ENCODE measurements at regions of chr9 and their contacts with region 1.

Region 1: GRCh38 chr9:763692-764524 is 77.6 kb upstream of the DMRT1 start:
- DNase-seq: peak; percentile 38 to 74
- ATAC-seq: peak; percentile 90 to 98 (median 96)
- H3K4me3 ChIP-seq: peak overlapping the region in 5 of 10 donors; percentile 10 to 41 (median 29)
- H3K27ac ChIP-seq: no peak overlapping the region
- H3K4me1 ChIP-seq: peaks cover 0 to 15% (median 0%) of the 10 kb centered on the region in 9 donors
- H3K27me3 ChIP-seq: peaks cover 0 to 12% (median 0%) of the 10 kb centered on the region in 7 donors
- CTCF ChIP-seq: peak; percentile 64 to 96 (median 92)

Region 2: GRCh38 chr9:385818-386398 is 378.0 kb before region 1 on chr9:
- intact Hi-C with region 1: loop called in 7 of 10 experiments (anchors 2 to 10 kb)
- DNase-seq: peak in 1 of 2 donors; percentile 45
- ATAC-seq: peak in 7 of 8 donors; percentile 69 to 89 (median 86)
- H3K4me3 ChIP-seq: no peak overlapping the region
- H3K27ac ChIP-seq: no peak overlapping the region
- H3K4me1 ChIP-seq: no peaks in the 10 kb centered on the region
- H3K27me3 ChIP-seq: peaks cover 0 to 3% (median 0%) of the 10 kb centered on the region in 7 donors
- CTCF ChIP-seq: peak; percentile 69 to 91 (median 87)

Region 3: GRCh38 chr9:650362-650761 is 113.5 kb before region 1 on chr9:
- intact Hi-C with region 1: no loop called
- DNase-seq: no peak
- ATAC-seq: peak in 2 of 8 donors; percentile 10 to 18
- H3K4me3 ChIP-seq: peak overlapping the region in 1 of 10 donors; percentile 9
- H3K27ac ChIP-seq: peak overlapping the region in 9 of 10 donors; percentile 1 to 90 (median 45)
- H3K4me1 ChIP-seq: peaks cover 0 to 78% (median 60%) of the 10 kb centered on the region in 9 donors
- H3K27me3 ChIP-seq: no peaks in the 10 kb centered on the region
- CTCF ChIP-seq: no peak